ENCODE measurements at regions of chrX and their contacts with region 1.

Region 1: DNA sequence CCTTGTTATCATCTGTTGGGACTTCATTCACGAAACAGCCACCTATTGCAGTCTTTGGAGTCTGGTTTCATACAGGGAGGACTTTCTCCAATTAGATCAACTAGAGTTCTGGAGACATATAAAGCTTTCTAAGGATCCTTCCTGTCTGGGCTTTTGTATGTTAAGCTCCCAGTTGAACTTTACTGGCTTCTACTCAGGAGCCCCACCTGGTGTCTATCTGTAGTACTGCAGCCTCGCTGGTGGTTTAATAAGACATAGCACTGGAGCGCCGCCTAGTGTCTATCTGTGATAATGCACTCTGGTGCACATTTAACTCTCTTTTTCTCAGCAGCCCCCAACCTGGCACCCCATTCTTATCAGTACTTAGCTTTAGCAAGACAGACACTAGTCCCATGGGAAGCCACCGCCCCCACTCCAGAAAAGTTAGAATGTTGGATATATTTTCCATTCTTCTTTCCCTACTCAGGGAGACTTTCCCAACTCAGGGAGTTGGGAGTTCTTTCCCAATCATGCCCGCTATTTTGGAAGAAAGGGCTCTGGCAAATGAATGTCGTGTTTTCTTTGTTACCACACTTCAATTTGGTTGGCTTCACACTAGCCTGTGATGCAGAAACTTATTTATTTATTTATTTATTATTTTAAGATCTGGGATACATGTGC is 36.9 kb upstream of the SYTL4 start:
- DNase-seq: peak; percentile 74
- H3K4me3 ChIP-seq: no peak overlapping the region
- H3K27ac ChIP-seq: no peak overlapping the region
- H3K4me1 ChIP-seq: no peaks in the 10 kb centered on the region
- CTCF ChIP-seq: peak; percentile 94

Region 2: GRCh38 chrX:100685284-100685996 is 83.4 kb before region 1 on chrX:
- CTCF ChIA-PET with region 1: interaction called, 10 read pairs
- POLR2A ChIA-PET with region 1: interaction called, 6 read pairs
- intact Hi-C with region 1: loop called (anchors 1 kb)
- DNase-seq: peak; percentile 76
- H3K4me3 ChIP-seq: no peak overlapping the region
- H3K27ac ChIP-seq: no peak overlapping the region
- H3K4me1 ChIP-seq: peaks cover 21% of the 10 kb centered on the region
- CTCF ChIP-seq: peak; percentile 85

Region 3: GRCh38 chrX:100802843-100803242 is 34.0 kb after region 1 on chrX:
- CTCF ChIA-PET with region 1: no interaction called
- POLR2A ChIA-PET with region 1: no interaction called
- intact Hi-C with region 1: no loop called
- DNase-seq: no peak
- H3K4me3 ChIP-seq: no peak overlapping the region
- H3K27ac ChIP-seq: no peak overlapping the region
- H3K4me1 ChIP-seq: no peaks in the 10 kb centered on the region
- CTCF ChIP-seq: no peak

Region 4: GRCh38 chrX:100911726-100912125 is 142.9 kb after region 1 on chrX:
- CTCF ChIA-PET with region 1: no interaction called
- POLR2A ChIA-PET with region 1: no interaction called
- intact Hi-C with region 1: no loop called
- DNase-seq: no peak
- H3K4me3 ChIP-seq: no peak overlapping the region
- H3K27ac ChIP-seq: no peak overlapping the region
- H3K4me1 ChIP-seq: peaks cover 24% of the 10 kb centered on the region
- CTCF ChIP-seq: no peak

Region 5: DNA sequence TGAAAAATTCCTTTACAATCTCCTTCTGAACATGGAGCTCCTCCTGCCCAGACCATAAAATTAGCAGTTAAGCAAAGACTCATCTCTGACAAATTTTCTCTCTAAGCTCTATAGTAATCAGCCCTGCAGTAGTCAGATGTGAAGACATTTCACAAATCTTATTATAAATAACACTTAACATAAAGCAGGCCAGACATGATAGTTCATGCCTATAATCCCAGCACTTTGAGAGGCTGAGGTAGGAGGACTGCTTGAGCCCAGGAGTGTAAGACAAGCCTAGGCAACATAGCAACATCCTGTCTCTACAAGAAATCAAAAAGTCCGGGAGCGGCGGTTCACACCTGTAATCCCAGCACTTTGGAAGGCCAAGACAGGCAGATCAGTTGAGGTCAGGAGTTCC is 253.2 kb after region 1 on chrX:
- CTCF ChIA-PET with region 1: no interaction called
- POLR2A ChIA-PET with region 1: no interaction called
- intact Hi-C with region 1: no loop called
- DNase-seq: no peak
- H3K4me3 ChIP-seq: no peak overlapping the region
- H3K27ac ChIP-seq: no peak overlapping the region
- H3K4me1 ChIP-seq: no peaks in the 10 kb centered on the region
- CTCF ChIP-seq: no peak